H1 (cell line): ENCODE measurements at regions of chr1 and their contacts with region 1.

Region 1: GRCh38 chr1:9292361-9293240 is at the start of gene SPSB1:
- DNase-seq: peak in 1 of 2 experiments; percentile 66
- H3K4me3 ChIP-seq: peak within 1 kb of the TSS; percentile 61 to 80 (median 66)
- H3K27ac ChIP-seq: no peak within 1 kb of the TSS
- H3K4me1 ChIP-seq: peaks cover 0 to 10% (median 5%) of the 10 kb centered on the region in 4 experiments; a peak in 4 of 7 replicates
- H3K27me3 ChIP-seq: peaks cover 0 to 21% (median 16%) of the 10 kb centered on the region in 4 experiments; a peak in 6 of 7 replicates
- CTCF ChIP-seq: no peak
- EP300 ChIP-seq: no peak
- POLR2A ChIP-seq: peak in 1 of 2 experiments; percentile 66; a peak in 1 of 3 replicates
- RAD21 ChIP-seq: no peak
- total RNA-seq, gene SPSB1: 4.0 and 5.3 TPM in 2 replicates

Region 2: DNA sequence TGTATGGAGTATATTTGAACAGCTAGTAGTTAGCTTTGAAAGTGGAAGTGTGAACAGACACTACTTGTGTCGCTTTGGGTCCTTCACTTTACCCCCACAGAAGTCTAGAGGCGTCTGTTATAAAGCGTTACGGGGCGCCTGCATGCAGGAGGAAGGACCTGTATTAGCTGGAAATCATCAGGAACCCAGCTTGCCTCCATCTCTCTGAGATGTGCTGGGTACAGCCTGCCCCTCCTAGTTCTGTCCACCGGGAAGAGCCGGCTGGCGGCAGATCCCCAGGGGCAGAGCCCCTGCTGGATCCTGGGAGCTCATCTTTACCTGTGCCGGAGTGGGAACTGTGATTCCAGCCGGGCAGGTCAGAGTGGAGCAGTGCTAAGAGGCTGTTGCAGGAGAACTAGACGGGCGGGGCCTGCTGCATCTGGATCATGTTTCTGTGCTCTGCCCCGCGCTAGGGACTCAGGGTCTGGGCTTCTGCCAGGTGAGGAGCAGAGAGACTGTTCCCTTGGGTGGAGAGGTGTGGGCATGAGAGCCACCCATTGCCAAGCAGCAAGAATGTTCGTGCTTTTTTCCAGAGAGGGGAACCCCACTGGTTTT is 22.2 kb before region 1 on chr1:
- CTCF ChIA-PET with region 1: interaction called, 33 read pairs
- POLR2A ChIA-PET with region 1: no interaction called
- DNase-seq: peak in 1 of 2 experiments; percentile 53
- H3K4me3 ChIP-seq: no peak overlapping the region
- H3K27ac ChIP-seq: no peak overlapping the region
- H3K4me1 ChIP-seq: peaks cover 0 to 4% (median 1%) of the 10 kb centered on the region in 4 experiments; a peak in 5 of 7 replicates
- H3K27me3 ChIP-seq: no peaks in the 10 kb centered on the region; a peak in 1 of 7 replicates
- CTCF ChIP-seq: no peak
- EP300 ChIP-seq: no peak
- POLR2A ChIP-seq: no peak
- RAD21 ChIP-seq: no peak

Region 3: DNA sequence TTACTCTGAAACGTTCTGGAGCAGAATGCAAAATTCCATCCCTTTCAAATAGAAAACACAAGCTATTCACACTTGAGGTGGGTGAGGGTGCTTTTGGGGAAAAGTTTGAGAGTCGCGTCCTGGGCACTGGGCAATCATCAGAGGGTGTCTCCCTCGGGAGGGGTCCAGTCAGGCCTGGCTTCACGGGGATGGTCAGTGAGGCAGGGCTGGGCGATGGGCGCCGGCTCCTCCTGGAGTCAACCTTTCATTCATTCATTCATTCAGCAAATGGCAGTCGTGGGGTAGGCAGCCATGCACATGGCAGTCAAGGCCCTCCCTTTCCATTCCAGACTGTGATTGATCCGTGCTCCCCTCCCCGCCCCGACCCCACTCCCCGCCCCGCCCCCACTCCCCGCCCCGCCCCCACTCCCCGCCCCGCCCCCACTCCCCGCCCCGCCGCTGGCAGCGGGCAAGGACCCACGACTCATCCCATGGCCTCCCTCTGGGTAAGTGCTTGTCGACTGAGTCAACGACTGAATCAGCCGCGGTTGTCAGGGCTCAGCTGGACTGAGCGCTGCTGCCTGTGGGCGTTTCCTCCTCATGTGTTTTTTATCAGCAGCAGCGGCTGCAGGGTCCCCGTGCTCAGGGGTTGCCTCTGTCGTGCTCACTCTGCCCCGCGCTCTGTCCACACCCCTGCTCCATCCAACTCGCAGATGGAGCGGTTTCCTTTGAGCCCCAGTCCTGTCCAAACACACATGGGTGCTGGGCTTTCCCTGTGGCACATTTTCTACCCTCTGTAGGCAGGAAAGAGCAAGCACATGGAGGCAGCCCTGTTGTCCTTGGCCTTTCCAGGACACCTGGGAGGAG is 12.4 kb before region 1 on chr1:
- CTCF ChIA-PET with region 1: interaction called, 19 read pairs
- POLR2A ChIA-PET with region 1: interaction called, 4 read pairs
- DNase-seq: no peak
- H3K4me3 ChIP-seq: no peak overlapping the region
- H3K27ac ChIP-seq: no peak overlapping the region
- H3K4me1 ChIP-seq: peaks cover 0 to 14% (median 9%) of the 10 kb centered on the region in 4 experiments; a peak in 6 of 7 replicates
- H3K27me3 ChIP-seq: no peaks in the 10 kb centered on the region; a peak in 1 of 7 replicates
- CTCF ChIP-seq: no peak
- EP300 ChIP-seq: no peak
- POLR2A ChIP-seq: no peak
- RAD21 ChIP-seq: no peak

Region 4: GRCh38 chr1:9311029-9311428 is 18.4 kb after region 1 on chr1:
- CTCF ChIA-PET with region 1: interaction called, 13 read pairs
- POLR2A ChIA-PET with region 1: no interaction called
- DNase-seq: no peak
- H3K4me3 ChIP-seq: no peak overlapping the region
- H3K27ac ChIP-seq: no peak overlapping the region
- H3K4me1 ChIP-seq: no peaks in the 10 kb centered on the region; a peak in 1 of 7 replicates
- H3K27me3 ChIP-seq: no peaks in the 10 kb centered on the region
- CTCF ChIP-seq: no peak
- EP300 ChIP-seq: no peak
- POLR2A ChIP-seq: no peak
- RAD21 ChIP-seq: no peak

Region 5: DNA sequence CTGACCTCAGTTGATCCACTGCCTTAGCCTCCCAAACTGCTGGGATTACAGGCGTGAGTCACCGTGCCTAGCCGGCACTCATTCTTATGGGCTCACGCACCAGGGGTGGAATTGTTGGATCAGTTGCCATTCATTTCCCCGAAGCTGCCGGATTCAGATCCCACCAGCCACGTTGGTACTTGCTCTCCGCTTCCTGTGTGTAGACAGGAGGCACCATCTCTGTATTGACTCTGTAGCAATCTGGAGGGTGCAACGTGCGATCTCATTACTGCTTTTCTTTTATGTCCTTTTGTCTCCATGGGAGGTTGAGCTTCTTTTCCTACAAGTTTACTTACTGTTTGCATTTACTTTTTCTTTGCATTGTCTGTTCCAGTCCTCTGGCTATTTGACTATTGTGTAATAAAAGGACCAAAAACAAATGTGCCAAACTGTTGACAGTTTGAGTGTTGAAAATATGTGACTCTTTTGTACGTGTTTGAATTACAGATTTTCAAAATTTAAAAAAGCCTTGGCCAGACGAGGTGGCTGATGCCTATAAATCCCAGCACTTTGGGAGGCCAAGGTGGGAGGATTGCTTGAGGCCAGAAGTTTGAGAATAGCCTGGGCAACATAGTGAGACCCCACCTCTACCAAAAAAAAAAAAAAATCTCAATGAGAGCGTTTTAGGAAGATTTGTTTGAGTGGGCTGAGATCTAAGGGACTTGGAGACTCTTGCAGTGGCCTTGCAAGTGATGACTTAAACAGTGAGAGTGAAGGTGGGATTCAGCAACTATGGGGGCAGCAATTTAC is 39.2 kb after region 1 on chr1:
- CTCF ChIA-PET with region 1: no interaction called
- POLR2A ChIA-PET with region 1: no interaction called
- DNase-seq: no peak
- H3K4me3 ChIP-seq: no peak overlapping the region
- H3K27ac ChIP-seq: no peak overlapping the region
- H3K4me1 ChIP-seq: no peaks in the 10 kb centered on the region; a peak in 1 of 7 replicates
- H3K27me3 ChIP-seq: no peaks in the 10 kb centered on the region
- CTCF ChIP-seq: no peak
- EP300 ChIP-seq: no peak
- POLR2A ChIP-seq: no peak
- RAD21 ChIP-seq: no peak

Region 6: DNA sequence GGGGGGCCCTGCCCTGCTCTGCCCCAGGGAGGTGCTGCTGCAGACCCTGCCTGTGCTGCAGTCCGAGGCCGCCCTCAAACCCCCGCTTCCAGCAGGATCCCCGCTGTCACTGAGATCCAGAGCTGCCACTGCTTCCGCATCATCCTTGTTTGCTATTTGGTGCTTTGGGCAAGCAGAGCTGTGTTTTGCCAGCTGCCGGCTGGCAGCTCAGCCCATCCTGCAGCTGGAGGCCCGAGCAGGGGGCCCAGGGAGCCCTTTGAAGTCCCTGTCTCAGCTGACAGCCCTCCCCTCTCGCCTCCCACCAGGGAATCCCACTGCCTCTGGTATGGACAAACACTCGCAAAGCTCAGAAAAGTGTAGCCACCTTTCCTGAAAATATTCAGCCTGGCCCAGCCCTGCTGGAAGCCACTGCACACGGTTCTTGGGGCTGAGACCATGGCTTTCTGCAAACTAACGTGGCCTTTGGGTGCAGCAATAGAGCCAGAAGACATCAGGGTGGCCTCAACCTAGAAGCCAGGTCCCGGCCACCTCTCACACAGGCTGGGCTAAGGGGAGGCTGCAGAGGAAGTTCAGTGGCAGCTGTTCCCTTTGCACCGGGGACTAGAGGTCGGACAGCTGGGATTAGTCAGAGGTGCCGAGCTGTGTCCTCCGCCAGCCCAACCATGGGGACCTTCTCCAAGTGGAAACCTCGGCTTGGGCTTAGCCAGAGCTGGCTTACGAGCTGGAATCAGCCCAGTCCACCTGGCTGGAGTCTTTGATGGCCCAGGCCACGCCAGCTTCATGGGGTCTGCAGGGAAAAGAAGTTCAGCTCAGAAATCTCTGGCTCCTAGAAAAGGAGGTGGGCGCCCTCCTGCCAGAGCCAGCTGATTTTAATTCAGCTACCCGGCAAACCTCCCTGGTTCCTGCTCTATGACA is 107.2 kb after region 1 on chr1:
- CTCF ChIA-PET with region 1: interaction called, 17 read pairs
- POLR2A ChIA-PET with region 1: no interaction called
- DNase-seq: no peak
- H3K4me3 ChIP-seq: no peak overlapping the region
- H3K27ac ChIP-seq: no peak overlapping the region
- H3K4me1 ChIP-seq: peaks cover 0 to 7% (median 2%) of the 10 kb centered on the region in 4 experiments; a peak in 5 of 7 replicates
- H3K27me3 ChIP-seq: no peaks in the 10 kb centered on the region
- CTCF ChIP-seq: no peak
- EP300 ChIP-seq: no peak
- POLR2A ChIP-seq: no peak
- RAD21 ChIP-seq: no peak

Region 7: DNA sequence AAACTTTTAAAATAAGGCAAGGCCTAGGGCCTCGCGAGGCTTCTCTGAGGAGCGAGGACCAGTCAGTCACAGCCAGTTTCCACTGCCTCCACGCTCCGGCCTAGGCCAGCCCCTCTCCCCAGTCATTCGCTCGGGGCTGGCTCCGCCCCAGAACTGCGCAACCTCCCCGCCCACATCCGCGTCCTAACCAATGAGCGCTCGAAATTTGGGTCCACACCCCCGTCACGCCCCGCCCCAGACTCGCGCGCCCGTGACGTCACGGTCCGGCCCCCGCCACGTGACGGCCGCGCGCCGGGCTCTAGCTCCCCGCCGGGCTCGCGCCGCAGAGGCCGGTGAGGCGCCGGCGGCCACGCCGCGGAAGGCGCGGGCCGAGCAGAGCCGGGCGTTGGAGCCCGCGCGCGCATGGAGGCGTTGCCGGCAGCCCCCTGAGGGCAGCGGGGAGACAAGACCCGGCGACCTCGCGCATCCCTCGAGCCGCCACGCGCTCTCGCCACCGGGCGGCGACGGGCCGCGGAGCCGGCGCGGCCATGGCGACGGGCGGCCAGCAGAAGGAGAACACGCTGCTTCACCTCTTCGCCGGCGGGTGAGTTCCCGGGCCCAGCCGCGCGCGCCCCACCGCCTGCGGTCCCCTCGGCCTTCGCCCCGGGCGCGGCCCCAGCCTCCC is 246.7 kb after region 1 on chr1 and contains the start of gene SLC25A33:
- CTCF ChIA-PET with region 1: no interaction called
- POLR2A ChIA-PET with region 1: no interaction called
- DNase-seq: peak; percentile 81 to 99
- H3K4me3 ChIP-seq: peak within 1 kb of the TSS; percentile 89 to 93 (median 92)
- H3K27ac ChIP-seq: peak within 1 kb of the TSS; percentile 74; the same call in 1 of the 2 replicates
- H3K4me1 ChIP-seq: peaks cover 0 to 12% (median 5%) of the 10 kb centered on the region in 4 experiments; a peak in 3 of 7 replicates
- H3K27me3 ChIP-seq: no peaks in the 10 kb centered on the region
- CTCF ChIP-seq: no peak
- EP300 ChIP-seq: no peak
- POLR2A ChIP-seq: peak; percentile 87 to 93
- RAD21 ChIP-seq: no peak
- total RNA-seq, gene SLC25A33: 12.4 and 12.8 TPM in 2 replicates